AG04450 (cell line): ENCODE measurements at regions of chr5 and their contacts with region 1.

Region 1: DNA sequence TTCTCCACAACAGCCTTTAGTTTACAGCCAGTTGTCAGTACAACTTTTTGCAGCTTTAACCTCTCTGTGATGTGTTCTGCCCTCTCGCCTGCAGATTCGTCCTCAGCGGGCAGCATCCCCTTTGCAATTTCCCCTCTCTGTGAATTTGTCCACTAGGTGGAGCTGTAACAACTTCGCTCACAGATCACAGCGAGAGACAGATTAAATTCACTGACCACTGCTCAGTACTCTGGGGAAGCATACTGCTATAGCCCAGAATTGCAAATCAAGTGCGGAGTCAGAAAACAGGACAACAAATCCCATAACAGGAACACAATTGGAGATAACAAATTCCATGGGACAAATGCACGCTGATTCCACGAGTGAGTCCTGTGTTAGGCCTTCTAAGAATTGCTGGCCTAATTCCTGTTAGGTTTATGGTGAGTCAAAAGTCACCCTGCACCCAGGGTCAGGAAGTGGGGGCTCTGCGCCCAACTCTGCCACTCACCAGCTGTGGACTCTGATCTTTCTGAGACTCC is 2124.9 kb downstream of the MAT2B start:
- DNase-seq: peak; percentile 43
- H3K4me3 ChIP-seq: no peak overlapping the region
- H3K27ac ChIP-seq: no peak overlapping the region
- H3K27me3 ChIP-seq: no peaks in the 10 kb centered on the region
- CTCF ChIP-seq: peak; percentile 87

Region 2: GRCh38 chr5:165609871-165610270 is 20.4 kb before region 1 on chr5:
- CTCF ChIA-PET with region 1: interaction called, 10 read pairs
- POLR2A ChIA-PET with region 1: no interaction called
- DNase-seq: no peak
- H3K4me3 ChIP-seq: no peak overlapping the region
- H3K27ac ChIP-seq: no peak overlapping the region
- H3K27me3 ChIP-seq: no peaks in the 10 kb centered on the region
- CTCF ChIP-seq: no peak

Region 3: DNA sequence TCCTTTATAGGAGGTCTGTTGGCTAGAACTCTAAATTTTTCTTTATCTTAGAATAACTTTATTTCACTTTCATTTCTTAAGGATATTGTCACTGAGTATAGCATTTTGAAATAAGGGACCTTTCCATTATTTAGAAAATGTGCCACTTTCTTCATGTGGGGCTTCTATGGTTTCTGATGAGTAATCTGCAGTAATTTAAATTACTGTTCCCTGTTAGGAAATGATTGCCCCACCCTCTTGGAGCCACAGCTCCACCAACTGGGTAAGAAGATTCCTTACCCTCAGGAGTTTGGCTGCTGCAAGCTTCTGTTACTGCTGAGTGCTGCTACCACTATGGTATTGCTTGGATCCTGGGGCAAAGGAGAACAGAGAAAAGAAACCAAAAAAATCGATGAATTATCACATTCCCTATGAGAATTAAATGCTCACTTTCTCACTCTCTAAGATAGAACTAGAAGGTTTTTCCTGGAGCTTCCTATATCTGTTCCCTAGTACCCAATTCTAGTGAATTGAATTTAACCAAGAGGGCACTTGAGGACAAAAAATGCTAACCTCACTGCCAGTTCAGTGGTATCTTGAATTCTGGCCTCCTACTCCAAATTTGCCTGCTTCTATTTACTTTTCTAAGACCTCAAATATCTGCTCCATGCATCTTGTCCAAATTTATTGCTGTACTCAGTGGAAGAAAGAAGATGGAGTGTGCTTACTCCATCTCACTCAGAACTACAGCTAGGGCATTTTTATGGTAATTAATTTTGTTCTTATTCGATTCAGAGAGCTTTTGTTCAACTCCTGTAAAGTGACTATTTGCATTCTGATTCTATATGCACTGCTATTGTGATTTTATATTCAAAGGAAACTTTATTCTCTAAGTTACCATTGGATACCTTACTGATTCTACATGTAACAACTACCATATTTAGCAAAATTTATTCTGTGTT is 13.6 kb before region 1 on chr5:
- CTCF ChIA-PET with region 1: interaction called, 49 read pairs
- POLR2A ChIA-PET with region 1: no interaction called
- DNase-seq: no peak
- H3K4me3 ChIP-seq: no peak overlapping the region
- H3K27ac ChIP-seq: no peak overlapping the region
- H3K27me3 ChIP-seq: no peaks in the 10 kb centered on the region
- CTCF ChIP-seq: peak; percentile 49

Region 4: DNA sequence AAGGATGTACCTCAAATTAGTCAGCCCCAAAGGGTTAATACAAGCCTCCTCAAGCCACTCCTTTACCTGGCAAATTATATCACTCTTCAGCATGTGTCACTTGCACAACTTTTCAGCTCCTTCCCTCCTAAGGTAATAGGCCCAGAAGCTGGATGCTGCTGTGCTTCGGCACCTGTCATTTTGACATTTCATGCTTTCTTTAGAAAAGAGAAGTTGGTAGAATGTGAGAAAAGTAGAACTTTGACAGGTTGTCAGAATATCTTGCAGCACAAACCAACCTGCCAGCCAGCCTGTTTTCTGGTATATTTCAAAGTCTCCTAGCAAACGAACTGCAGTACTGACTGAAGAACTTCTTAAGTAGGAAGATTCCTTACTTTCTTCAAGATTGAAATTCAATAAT is 12.0 kb after region 1 on chr5:
- CTCF ChIA-PET with region 1: interaction called, 23 read pairs
- POLR2A ChIA-PET with region 1: no interaction called
- DNase-seq: no peak
- H3K4me3 ChIP-seq: no peak overlapping the region
- H3K27ac ChIP-seq: no peak overlapping the region
- H3K27me3 ChIP-seq: no peaks in the 10 kb centered on the region
- CTCF ChIP-seq: no peak

Region 5: DNA sequence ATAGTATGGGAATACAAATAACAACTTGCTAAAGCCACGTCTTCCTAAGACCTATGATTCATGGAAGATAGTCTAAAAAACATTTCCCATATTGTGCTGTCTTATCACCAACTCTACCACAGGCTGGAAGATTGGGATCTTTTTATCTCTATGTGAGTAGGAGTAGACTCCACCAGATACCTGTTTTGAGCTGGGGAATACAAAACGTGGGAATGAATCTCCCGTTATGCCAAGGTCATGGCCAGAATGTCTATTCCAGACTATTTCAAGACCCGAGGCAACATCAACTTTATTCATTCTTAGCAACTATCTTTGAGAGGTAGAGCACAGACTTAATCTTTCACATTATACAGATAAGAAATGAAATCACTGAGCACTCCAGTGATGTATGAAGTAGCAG is 310.2 kb after region 1 on chr5:
- CTCF ChIA-PET with region 1: no interaction called
- POLR2A ChIA-PET with region 1: no interaction called
- DNase-seq: no peak
- H3K4me3 ChIP-seq: no peak overlapping the region
- H3K27ac ChIP-seq: no peak overlapping the region
- H3K27me3 ChIP-seq: no peaks in the 10 kb centered on the region
- CTCF ChIP-seq: no peak

Region 6: DNA sequence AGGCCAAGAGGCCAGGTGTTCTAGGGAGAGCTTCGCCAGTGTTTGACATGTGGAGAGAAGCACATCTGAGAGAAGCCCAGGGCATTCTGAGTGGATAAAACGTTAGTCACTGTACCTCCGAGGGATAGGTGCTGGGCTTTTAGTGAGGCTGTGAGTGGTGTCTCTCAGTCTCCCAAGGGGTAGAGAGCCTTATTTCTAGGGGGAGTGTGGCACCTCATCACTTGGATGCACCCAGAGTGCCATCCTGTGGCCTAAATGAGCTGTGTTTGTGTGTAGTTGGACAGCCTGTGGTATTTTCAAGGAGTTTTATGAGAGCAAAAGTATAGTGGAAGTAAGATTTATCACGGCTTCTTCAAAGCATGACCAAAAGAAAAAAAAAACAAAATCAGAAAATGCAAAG is 1614.3 kb after region 1 on chr5:
- CTCF ChIA-PET with region 1: interaction called, 13 read pairs
- POLR2A ChIA-PET with region 1: no interaction called
- DNase-seq: no peak
- H3K4me3 ChIP-seq: no peak overlapping the region
- H3K27ac ChIP-seq: no peak overlapping the region
- H3K27me3 ChIP-seq: no peaks in the 10 kb centered on the region
- CTCF ChIP-seq: peak; percentile 37